Ascending aorta (tissue), 2 donors: ENCODE measurements at regions of chr14 and their contacts with region 1.

Region 1: GRCh38 chr14:103333754-103334643 is at the start of gene EIF5:
- DNase-seq: peak; percentile 93 to 100
- H3K4me3 ChIP-seq: peak within 1 kb of the TSS; percentile 96 to 97
- H3K27ac ChIP-seq: peak within 1 kb of the TSS; percentile 100
- H3K4me1 ChIP-seq: peaks cover 0 to 17% of the 10 kb centered on the region in 2 donors
- H3K27me3 ChIP-seq: no peaks in the 10 kb centered on the region
- CTCF ChIP-seq: peak; percentile 9 to 56 (median 22)
- total RNA-seq, gene EIF5: 85.5 TPM

Region 2: DNA sequence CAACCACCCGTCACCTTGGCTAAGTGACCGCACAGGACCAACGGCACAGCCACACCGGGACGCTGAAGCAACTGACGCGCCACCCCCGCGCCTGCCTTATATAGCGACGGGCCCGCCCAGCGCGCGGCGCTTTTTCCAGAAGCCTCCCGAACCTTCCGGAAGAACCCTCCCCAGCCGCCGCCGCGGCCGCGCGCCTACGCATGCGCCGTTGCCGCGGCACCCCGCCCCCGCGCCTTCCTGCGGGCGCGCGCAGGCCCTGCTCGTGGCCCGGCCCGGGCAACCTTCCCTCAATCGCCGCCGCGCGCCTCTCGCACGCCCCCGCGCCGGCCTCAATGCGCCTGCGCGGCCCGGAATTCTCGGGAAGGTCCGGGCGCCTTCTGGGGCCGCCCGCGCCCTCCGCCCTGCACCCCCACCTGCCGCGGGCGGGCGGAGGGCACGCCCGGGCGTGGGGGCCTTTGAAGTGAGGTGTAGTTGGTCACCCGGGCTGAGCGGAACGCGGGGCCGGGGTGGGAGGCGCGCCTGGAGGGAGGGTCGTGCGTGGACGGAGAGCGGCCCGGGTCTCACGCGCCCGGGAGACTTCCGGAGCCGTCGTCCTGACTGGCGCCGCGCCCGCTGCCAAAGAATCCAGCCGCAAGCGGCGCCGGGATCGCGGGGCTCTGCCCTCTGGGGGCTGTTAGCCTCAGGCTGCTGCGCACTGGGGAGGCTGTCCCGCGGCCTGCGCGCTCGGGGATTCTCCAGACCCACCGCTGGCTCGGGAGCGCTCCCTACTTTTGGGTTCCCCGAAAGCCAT is 1246.8 kb before region 1 on chr14 and contains the start of gene HSP90AA1:
- intact Hi-C with region 1: loop called (anchors 2 kb)
- DNase-seq: peak; percentile 75 to 96
- H3K4me3 ChIP-seq: peak within 1 kb of the TSS; percentile 89 to 97
- H3K27ac ChIP-seq: peak within 1 kb of the TSS; percentile 98 to 100
- H3K4me1 ChIP-seq: peaks cover 13 to 37% of the 10 kb centered on the region in 2 donors
- H3K27me3 ChIP-seq: no peaks in the 10 kb centered on the region
- CTCF ChIP-seq: peak in 2 of 3 experiments; percentile 19 to 29
- total RNA-seq, gene HSP90AA1: 120 TPM

Region 3: GRCh38 chr14:102430212-102430908 is 903.6 kb before region 1 on chr14:
- intact Hi-C with region 1: no loop called
- DNase-seq: no peak
- H3K4me3 ChIP-seq: no peak overlapping the region
- H3K27ac ChIP-seq: no peak overlapping the region
- H3K4me1 ChIP-seq: no peaks in the 10 kb centered on the region
- H3K27me3 ChIP-seq: no peaks in the 10 kb centered on the region
- CTCF ChIP-seq: no peak

Region 4: DNA sequence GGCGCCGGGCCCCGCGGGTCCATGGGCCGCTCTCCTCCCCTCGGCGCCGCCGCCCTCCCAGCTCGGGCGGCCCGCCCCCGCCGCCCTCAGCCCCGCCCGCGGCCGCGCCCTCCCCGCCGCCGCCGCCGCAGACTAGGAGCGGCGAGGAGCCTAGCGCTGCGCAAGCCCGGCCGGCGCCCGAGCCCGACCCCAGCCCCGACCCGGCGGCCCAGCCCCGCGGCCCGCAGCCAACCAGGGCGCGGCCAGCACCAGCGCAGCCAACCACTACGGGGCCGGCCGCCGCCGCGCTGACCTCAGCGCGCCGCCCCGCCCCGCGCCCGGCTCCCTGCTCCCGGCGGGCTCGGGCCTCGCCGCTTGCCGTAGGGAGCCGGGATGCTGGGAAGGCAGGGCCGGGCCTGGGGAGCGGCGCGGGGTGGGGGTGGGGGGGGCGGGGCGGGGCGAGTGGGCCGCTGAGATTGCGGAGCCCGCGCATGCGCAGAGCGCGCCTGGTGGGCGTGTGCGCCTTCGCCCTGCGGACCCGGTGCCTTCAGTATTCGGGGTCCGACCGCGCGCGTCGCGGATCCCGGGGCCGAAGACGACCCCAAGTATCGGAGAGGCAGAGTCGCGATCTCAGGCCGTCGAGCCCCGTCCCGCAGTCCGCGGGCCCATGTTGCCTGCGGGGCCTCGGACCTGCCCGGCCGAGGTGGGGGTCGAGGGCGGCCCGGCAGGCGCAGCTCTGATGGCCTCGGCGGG is 276.5 kb before region 1 on chr14 and contains the start of gene CDC42BPB:
- intact Hi-C with region 1: loop called (anchors 5 kb)
- DNase-seq: peak; percentile 38 to 93
- H3K4me3 ChIP-seq: peak within 1 kb of the TSS; percentile 75 to 98
- H3K27ac ChIP-seq: peak within 1 kb of the TSS; percentile 92 to 93
- H3K4me1 ChIP-seq: peaks cover 6 to 20% of the 10 kb centered on the region in 2 donors
- H3K27me3 ChIP-seq: no peaks in the 10 kb centered on the region
- CTCF ChIP-seq: no peak
- total RNA-seq, gene CDC42BPB: 96.5 TPM

Region 5: GRCh38 chr14:103385152-103385993 is 51.4 kb after region 1 on chr14 and contains the start of gene MARK3:
- intact Hi-C with region 1: loop called (anchors 1 kb)
- DNase-seq: peak; percentile 95 to 99
- H3K4me3 ChIP-seq: peak within 1 kb of the TSS; percentile 94 to 95
- H3K27ac ChIP-seq: peak within 1 kb of the TSS; percentile 98 to 99
- H3K4me1 ChIP-seq: peaks cover 6 to 25% of the 10 kb centered on the region in 2 donors
- H3K27me3 ChIP-seq: no peaks in the 10 kb centered on the region
- CTCF ChIP-seq: no peak
- total RNA-seq, gene MARK3: 78.1 TPM

Region 6: GRCh38 chr14:103552011-103552845 is 218.2 kb after region 1 on chr14:
- intact Hi-C with region 1: loop called (anchors 10 kb)
- DNase-seq: peak in 1 of 2 donors; percentile 86
- H3K4me3 ChIP-seq: peak overlapping the region; percentile 36 to 48
- H3K27ac ChIP-seq: peak overlapping the region; percentile 95 to 97
- H3K4me1 ChIP-seq: peaks cover 19 to 38% of the 10 kb centered on the region in 2 donors
- H3K27me3 ChIP-seq: no peaks in the 10 kb centered on the region
- CTCF ChIP-seq: no peak

Region 7: DNA sequence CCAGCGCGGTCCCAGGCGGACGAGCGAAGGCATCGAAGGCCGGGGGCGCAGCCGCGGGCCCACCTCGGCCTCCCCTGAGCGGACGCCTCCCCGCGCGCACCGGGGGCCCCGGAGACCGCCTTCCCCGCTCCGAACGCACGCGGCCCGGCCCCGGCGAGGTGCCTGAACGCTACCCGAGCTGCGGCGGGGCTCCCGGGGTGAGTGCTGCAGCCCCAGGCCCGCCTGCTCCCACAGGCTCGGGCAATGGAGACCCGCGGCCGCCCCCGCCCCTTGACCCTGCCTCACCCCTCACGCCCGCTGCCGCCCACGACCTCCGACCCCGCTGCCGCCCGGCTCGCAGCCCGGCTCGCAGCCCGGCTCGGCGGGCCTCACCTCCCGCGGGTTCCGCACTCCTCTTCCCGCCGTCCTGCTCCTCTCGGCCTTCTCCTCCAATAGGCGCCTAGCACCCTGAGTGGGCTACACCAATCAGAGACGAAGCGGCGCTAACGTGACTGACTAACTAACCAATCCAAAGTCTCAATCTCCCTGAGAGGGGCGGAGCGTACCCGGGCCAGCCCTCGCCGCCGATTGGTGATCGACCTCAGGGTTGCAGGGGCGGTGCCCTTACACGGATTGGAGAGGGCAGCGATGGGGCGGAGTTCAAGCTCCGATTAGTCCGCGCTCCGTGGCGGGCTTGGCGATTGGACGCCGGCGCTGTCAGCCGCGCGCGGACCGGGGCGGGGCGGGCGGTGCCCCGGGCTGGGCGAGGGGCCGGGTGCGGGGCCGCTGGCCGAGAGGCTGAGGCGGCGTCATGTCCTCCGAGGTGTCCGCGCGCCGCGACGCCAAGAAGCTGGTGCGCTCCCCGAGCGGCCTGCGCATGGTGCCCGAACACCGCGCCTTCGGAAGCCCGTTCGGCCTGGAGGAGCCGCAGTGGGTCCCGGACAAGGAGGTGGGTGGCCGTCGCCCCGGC is 381.3 kb after region 1 on chr14 and contains the starts of genes XRCC3 and ZFYVE21:
- intact Hi-C with region 1: loop called (anchors 10 kb)
- DNase-seq: peak; percentile 99 to 100
- H3K4me3 ChIP-seq: peak within 1 kb of the TSS; percentile 94 to 99
- H3K27ac ChIP-seq: peak within 1 kb of the TSS; percentile 77 to 90
- H3K4me1 ChIP-seq: peaks cover 30 to 53% of the 10 kb centered on the region in 2 donors
- H3K27me3 ChIP-seq: no peaks in the 10 kb centered on the region
- CTCF ChIP-seq: no peak
- total RNA-seq, gene XRCC3: 9.0 TPM
- total RNA-seq, gene ZFYVE21: 219 TPM